ENCODE measurements at regions of chr1 and their contacts with region 1.

Region 1: GRCh38 chr1:207797229-207797961 is 45.5 kb downstream of the CD46 start:
- DNase-seq: peak; percentile 92
- ATAC-seq: peak; percentile 91
- H3K4me3 Mint-ChIP-seq: no peak overlapping the region
- H3K27ac Mint-ChIP-seq: peak overlapping the region; percentile 11
- H3K4me1 Mint-ChIP-seq: peaks cover 36% of the 10 kb centered on the region
- H3K27me3 Mint-ChIP-seq: no peaks in the 10 kb centered on the region
- CTCF ChIP-seq: peak; percentile 76

Region 2: GRCh38 chr1:207579436-207579799 is 218.0 kb before region 1 on chr1:
- CTCF ChIA-PET with region 1: interaction called, 15 read pairs
- POLR2A ChIA-PET with region 1: no interaction called
- intact Hi-C with region 1: no loop called
- DNase-seq: peak; percentile 67
- ATAC-seq: peak; percentile 85
- H3K4me3 Mint-ChIP-seq: no peak overlapping the region
- H3K27ac Mint-ChIP-seq: no peak overlapping the region
- H3K4me1 Mint-ChIP-seq: peaks cover 5% of the 10 kb centered on the region
- H3K27me3 Mint-ChIP-seq: no peaks in the 10 kb centered on the region
- CTCF ChIP-seq: peak; percentile 61

Region 3: DNA sequence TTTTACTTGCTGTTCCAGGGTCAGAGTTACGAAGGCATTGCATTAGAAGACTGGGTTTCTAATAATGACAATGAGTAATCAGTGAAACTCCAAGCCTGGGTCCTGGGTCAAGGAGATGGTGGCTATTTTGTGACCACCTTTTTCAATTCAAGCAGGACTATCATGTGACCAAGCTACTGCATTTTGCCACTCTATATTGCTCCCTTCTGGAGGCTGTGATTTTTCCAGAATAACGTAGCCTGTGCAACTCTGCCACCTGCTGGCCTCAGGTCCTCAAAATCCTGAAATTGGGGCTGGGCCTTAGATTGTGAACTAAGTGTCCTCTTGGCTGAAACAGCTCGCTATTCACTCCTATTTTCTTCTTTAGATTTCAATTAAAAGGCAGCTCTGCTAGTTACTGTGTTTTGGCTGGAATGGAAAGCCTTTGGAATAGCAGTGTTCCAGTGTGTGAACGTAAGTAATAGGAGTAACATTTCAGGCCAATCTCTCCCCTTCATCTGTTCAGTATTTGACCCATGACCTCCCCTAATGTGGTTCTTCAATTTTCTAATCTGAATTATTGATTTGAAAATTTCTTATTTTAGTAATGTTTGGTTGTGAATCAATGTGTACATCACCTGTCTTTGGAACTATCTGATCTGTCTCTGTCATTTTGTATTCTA is 98.4 kb before region 1 on chr1:
- CTCF ChIA-PET with region 1: interaction called, 11 read pairs
- POLR2A ChIA-PET with region 1: no interaction called
- intact Hi-C with region 1: no loop called
- DNase-seq: peak; percentile 64
- ATAC-seq: peak; percentile 55
- H3K4me3 Mint-ChIP-seq: no peak overlapping the region
- H3K27ac Mint-ChIP-seq: no peak overlapping the region
- H3K4me1 Mint-ChIP-seq: no peaks in the 10 kb centered on the region
- H3K27me3 Mint-ChIP-seq: peaks cover 2% of the 10 kb centered on the region
- CTCF ChIP-seq: peak; percentile 58

Region 4: DNA sequence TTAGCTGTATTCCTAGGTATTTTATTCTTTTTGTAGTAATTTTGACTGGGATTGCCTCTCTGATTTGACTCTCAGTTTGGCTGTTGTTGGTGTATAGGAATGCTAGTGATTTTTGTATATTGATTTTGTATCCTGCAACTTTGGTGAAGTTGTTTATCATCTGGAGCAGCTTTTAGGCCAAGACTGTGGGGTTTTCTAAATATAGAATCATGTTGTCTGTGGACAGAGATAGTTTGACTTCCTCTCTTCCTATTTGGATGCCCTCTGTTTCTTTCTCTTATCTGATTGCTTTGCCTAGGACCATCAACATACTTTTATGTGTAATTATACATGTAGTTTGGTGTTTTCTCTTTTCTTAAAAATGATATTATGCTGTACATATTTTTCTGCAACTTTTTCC is 18.4 kb before region 1 on chr1:
- CTCF ChIA-PET with region 1: interaction called, 20 read pairs
- POLR2A ChIA-PET with region 1: no interaction called
- intact Hi-C with region 1: no loop called
- DNase-seq: no peak
- ATAC-seq: no peak
- H3K4me3 Mint-ChIP-seq: no peak overlapping the region
- H3K27ac Mint-ChIP-seq: no peak overlapping the region
- H3K4me1 Mint-ChIP-seq: peaks cover 25% of the 10 kb centered on the region
- H3K27me3 Mint-ChIP-seq: no peaks in the 10 kb centered on the region
- CTCF ChIP-seq: no peak

Region 5: DNA sequence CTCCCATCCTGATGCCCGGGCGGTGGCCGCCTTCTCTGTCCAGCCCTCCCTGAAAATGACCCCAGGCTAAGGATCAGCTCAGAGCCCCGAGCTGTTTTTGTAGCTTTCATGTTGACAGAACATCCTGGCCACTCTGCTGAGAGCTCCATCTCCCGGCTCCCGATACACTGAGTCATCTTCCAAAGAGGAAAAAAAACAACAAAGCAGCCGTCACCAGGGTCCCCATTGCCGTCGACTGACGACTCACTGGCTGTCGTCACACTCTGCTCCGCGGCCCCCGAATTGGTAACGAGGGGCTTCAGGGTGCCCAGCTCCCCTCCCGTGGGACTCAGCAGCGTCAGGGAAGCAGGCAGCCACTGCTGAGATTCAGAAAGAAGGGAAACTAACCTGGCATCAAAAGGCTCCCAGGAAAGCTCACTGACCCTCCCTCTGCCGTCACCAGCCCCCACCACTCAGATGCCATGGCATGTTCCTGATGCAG is 21.6 kb after region 1 on chr1:
- CTCF ChIA-PET with region 1: interaction called, 13 read pairs
- POLR2A ChIA-PET with region 1: no interaction called
- intact Hi-C with region 1: no loop called
- DNase-seq: no peak
- ATAC-seq: no peak
- H3K4me3 Mint-ChIP-seq: no peak overlapping the region
- H3K27ac Mint-ChIP-seq: no peak overlapping the region
- H3K4me1 Mint-ChIP-seq: peaks cover 64% of the 10 kb centered on the region
- H3K27me3 Mint-ChIP-seq: no peaks in the 10 kb centered on the region
- CTCF ChIP-seq: no peak

Region 6: DNA sequence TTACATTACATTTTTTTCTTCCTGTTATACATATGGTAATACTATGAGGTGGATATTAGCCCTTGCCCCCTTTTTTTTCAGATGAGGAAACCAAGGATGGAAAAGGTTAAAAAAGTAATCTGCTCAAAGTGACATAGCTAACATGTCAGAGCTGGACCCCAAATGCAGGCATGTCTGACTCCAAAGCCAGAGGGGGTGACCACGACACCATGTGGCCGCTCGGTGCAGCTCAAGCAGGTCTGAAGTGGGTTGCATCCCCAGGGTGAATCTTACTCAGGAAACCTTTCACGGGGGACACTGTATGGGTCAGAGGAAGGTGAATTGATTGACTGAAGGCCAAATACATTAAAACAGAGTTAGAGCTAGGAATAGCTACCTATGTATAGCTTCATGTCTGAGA is 78.7 kb after region 1 on chr1:
- CTCF ChIA-PET with region 1: interaction called, 45 read pairs
- POLR2A ChIA-PET with region 1: interaction called, 3 read pairs
- intact Hi-C with region 1: no loop called
- DNase-seq: peak; percentile 55
- ATAC-seq: no peak
- H3K4me3 Mint-ChIP-seq: no peak overlapping the region
- H3K27ac Mint-ChIP-seq: no peak overlapping the region
- H3K4me1 Mint-ChIP-seq: peaks cover 46% of the 10 kb centered on the region
- H3K27me3 Mint-ChIP-seq: no peaks in the 10 kb centered on the region
- CTCF ChIP-seq: no peak

Measured in activated CD8-positive, alpha-beta T cell treated with anti-CD3 and anti-CD28 coated beads for 36 hours (primary cell).